Right ventricle myocardium inferior (tissue), 1 donor: ENCODE measurements at regions of chr21 and their contacts with region 1.

Region 1: GRCh38 chr21:28235169-28235895 is 757.3 kb downstream of the LTN1 start:
- DNase-seq: no peak
- ATAC-seq: peak; percentile 20

Region 2: GRCh38 chr21:28111151-28111619 is 124.1 kb before region 1 on chr21:
- intact Hi-C with region 1: loop called (anchors 5 kb)
- DNase-seq: no peak
- ATAC-seq: peak; percentile 99

Region 3: DNA sequence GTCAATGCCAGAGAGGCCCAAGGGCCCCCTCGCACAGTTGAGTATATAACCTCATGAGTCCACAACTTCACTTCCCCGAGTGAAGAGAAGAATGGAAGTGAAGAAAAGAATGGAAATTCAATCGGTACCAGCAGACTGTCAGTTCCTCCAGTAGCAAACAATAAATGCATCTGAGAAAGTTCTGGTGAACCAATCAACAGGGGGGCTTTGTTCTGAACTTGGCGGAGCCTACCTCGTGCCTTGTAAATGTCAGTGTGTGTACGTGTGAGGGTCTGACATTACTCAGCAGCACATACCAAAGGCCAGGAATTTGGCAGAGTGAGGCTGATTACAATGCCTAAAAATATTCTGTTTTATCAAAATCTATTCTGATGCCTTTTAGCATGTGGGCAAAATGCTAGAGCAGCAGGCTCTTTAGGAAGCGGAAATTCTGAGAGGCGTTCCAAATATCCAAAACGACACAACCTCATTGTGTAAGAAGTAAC is 518.8 kb after region 1 on chr21:
- intact Hi-C with region 1: loop called (anchors 5 kb)
- DNase-seq: peak; percentile 69
- ATAC-seq: peak; percentile 96